GM10248 (cell line): ENCODE measurements at regions of chr14 and their contacts with region 1.

Region 1: GRCh38 chr14:23469906-23470403 is 452 bp downstream of the NGDN start:
- DNase-seq: no peak
- CTCF ChIP-seq: no peak

Region 2: DNA sequence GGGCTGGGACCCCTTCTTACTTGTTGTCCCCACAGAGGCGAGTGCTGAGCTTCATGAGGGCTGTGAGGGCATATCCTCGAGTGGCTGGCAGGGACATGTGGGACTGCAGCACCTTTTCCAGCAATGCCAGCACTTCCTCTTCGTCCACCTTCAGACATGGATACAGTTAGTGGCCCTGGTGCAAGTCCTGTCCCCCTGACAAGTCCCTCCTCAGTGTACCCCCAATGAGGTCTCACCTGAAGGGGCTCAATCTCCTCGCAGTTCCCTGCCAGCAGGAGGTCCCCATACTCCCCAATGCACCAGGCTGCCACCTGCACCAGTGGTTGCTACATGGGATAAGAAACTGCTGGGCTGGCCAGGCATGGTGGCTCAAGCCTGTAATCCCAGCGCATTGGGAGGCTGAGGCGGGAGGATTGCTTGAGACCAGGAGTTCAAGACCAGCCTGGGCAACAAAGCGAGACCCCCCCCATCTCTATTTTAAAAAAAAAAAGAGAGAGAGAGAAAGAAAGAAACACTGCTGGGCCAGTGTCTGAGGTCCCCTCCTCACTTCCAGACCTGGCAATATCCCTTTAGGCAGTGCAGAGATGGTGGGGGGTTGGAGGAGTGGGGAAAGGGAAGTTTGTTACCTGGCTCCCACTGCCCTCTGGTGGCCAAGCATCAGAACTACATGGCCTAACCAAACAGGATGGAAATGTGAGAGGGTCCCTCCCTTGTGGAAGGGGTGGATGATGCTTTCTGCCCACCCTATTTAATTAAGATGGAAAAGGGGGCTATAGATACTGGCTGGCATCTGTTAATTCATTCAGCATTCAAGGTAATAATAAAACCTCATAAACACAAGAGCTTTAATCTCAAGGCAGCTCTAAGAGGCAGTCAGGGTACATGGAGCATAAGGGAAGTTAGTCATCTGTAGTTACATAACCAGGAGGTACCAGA is 92.6 kb after region 1 on chr14:
- CTCF ChIA-PET with region 1: interaction called, 497 read pairs
- POLR2A ChIA-PET with region 1: no interaction called
- DNase-seq: peak; percentile 62
- CTCF ChIP-seq: peak; percentile 93